HCT116 (cell line): ENCODE measurements at regions of chr18 and their contacts with region 1.

Region 1: DNA sequence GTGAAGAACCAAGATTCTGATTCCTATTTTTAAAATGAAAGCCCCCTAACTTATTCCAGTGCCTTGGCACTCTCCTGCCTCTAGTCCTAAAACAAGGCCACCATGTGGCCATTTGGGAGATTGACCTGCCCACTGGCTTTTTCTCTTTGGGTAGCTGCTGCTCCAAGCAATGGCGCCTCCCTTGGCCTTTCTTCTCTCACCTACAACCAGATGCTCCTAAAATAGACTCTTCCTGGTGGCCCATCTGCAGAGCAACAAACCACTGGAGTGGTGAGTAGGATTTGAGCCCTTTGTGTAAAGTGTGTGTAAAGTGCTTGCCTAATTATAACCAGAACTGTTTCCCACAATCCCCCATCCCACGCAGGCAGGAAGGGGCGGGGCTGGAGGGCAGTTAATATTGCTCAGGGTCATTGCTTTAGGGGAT is 114.2 kb downstream of the FHOD3 start:
- DNase-seq: peak; percentile 50
- ATAC-seq: peak; percentile 87
- H3K4me3 ChIP-seq: no peak overlapping the region
- H3K27ac ChIP-seq: no peak overlapping the region
- H3K4me1 ChIP-seq: 0 out of 4 replicates have a peak, but pooled peaks cover 0 to 4% of the 10 kb centered on the region in 2 experiments
- H3K27me3 ChIP-seq: no peaks in the 10 kb centered on the region
- CTCF ChIP-seq: peak; percentile 67 to 82 (median 69); a peak in 5 of 6 replicates
- POLR2A ChIP-seq: no peak
- RAD21 ChIP-seq: peak; percentile 55; the same call in 1 of the 2 replicates

Region 2: GRCh38 chr18:36241831-36242230 is 169.9 kb before region 1 on chr18:
- CTCF ChIA-PET with region 1: no interaction called
- POLR2A ChIA-PET with region 1: no interaction called
- RAD21 ChIA-PET with region 1: no interaction called
- intact Hi-C with region 1: no loop called
- DNase-seq: no peak
- ATAC-seq: no peak
- H3K4me3 ChIP-seq: no peak overlapping the region
- H3K27ac ChIP-seq: no peak overlapping the region
- H3K4me1 ChIP-seq: no peaks in the 10 kb centered on the region
- H3K27me3 ChIP-seq: no peaks in the 10 kb centered on the region
- CTCF ChIP-seq: no peak
- POLR2A ChIP-seq: no peak
- RAD21 ChIP-seq: no peak

Region 3: GRCh38 chr18:36296650-36297416 is 114.9 kb before region 1 on chr18:
- CTCF ChIA-PET with region 1: interaction called, 4 read pairs
- POLR2A ChIA-PET with region 1: no interaction called
- RAD21 ChIA-PET with region 1: no interaction called
- intact Hi-C with region 1: loop called (anchors 1 kb)
- DNase-seq: peak; percentile 40
- ATAC-seq: peak; percentile 77
- H3K4me3 ChIP-seq: peak overlapping the region; percentile 52 to 65
- H3K27ac ChIP-seq: no peak overlapping the region; the same call in 1 of the 2 replicates
- H3K4me1 ChIP-seq: peaks cover 0 to 13% of the 10 kb centered on the region in 2 experiments; a peak in 2 of 4 replicates
- H3K27me3 ChIP-seq: no peaks in the 10 kb centered on the region; the same call in 1 of the 2 replicates
- CTCF ChIP-seq: peak; percentile 1 to 58 (median 39); a peak in 4 of 6 replicates
- POLR2A ChIP-seq: no peak
- RAD21 ChIP-seq: peak; percentile 65

Region 4: DNA sequence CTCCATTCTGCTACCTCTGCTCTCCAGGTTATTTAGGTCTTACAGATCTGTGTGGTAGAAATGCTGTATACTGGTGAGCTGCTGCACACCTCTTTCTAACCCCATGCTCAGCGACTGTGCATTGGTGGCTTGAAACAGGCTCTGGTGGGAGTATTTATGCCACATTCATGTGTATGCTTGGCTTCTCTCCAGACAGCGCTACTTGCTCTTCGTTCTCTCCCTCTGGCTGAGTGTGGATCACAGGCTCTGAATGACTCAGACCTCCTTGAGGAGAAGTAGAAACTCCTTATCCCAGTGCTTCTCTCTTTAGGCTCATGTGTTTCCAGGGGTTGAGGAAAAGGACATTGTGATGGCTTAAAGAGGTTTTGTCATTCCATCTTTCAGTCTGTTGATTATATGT is 59.4 kb before region 1 on chr18:
- CTCF ChIA-PET with region 1: no interaction called
- POLR2A ChIA-PET with region 1: no interaction called
- RAD21 ChIA-PET with region 1: no interaction called
- intact Hi-C with region 1: no loop called
- DNase-seq: no peak
- ATAC-seq: 0 out of 2 replicates have a peak, but pooled peaks have one; percentile 34
- H3K4me3 ChIP-seq: no peak overlapping the region
- H3K27ac ChIP-seq: no peak overlapping the region
- H3K4me1 ChIP-seq: peaks cover 0 to 18% of the 10 kb centered on the region in 2 experiments; a peak in 3 of 4 replicates
- H3K27me3 ChIP-seq: no peaks in the 10 kb centered on the region
- CTCF ChIP-seq: no peak
- POLR2A ChIP-seq: no peak
- RAD21 ChIP-seq: no peak

Region 5: GRCh38 chr18:36398371-36398770 is 13.4 kb before region 1 on chr18:
- CTCF ChIA-PET with region 1: interaction called, 10 read pairs
- POLR2A ChIA-PET with region 1: interaction called, 3 read pairs
- RAD21 ChIA-PET with region 1: no interaction called
- intact Hi-C with region 1: no loop called
- DNase-seq: no peak
- ATAC-seq: no peak
- H3K4me3 ChIP-seq: no peak overlapping the region
- H3K27ac ChIP-seq: no peak overlapping the region
- H3K4me1 ChIP-seq: no peaks in the 10 kb centered on the region
- H3K27me3 ChIP-seq: no peaks in the 10 kb centered on the region
- CTCF ChIP-seq: no peak
- POLR2A ChIP-seq: no peak
- RAD21 ChIP-seq: no peak